HepG2 (cell line): ENCODE measurements at regions of chr9 and their contacts with region 1.

Region 1: DNA sequence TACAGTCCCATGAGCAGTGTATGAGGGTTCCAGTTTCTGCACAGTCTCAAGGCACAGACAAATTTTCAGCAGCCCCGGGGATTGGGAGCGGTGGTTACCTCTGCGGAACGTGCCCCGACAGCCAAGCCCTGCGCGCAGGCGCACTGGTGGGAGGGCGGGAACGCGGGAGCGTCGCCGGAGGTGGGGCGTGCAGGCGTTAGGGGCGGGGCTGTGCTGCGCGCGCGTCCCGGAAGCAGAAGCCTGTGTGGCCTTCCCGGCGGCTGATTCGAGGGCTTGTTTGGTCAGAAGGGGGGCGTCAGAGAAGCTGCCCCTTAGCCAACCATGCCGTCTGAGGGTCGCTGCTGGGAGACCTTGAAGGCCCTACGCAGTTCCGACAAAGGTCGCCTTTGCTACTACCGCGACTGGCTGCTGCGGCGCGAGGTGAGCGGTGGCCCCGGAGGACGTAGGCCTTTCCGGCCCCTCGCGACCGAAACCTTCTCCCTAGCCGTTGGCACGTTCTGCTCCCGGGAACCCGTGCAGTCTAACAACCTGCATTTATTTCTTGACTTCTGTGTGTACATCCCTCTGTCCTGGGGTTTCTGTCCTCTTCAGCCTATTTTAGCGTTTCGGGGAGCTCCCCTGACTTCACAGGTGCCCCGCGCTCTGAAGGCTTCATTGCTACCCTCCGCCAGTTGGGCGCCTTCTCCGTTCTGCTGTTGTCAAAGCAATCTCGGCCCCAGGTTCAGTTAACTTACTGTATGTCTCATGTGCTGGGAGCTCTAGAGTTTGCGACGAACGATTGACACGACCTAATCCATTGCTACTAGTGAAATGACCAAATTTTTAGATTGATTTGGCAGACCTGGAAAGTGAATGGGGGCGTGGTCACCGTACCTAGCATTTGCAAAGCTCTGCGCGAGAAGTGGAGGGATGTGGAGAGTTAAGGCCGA is at the start of gene GLE1:
- DNase-seq: peak; percentile 82
- ATAC-seq: peak; percentile 98
- H3K4me3 ChIP-seq: peak within 1 kb of the TSS; percentile 82 to 96 (median 90)
- H3K27ac ChIP-seq: peak within 1 kb of the TSS; percentile 79
- H3K4me1 ChIP-seq: peaks cover 21% of the 10 kb centered on the region
- H3K27me3 ChIP-seq: no peaks in the 10 kb centered on the region; a peak in 1 of 5 replicates
- CTCF ChIP-seq: peak; percentile 29; the same call in 1 of the 2 replicates
- EP300 ChIP-seq: no peak
- POLR2A ChIP-seq: peak; percentile 72 to 94
- RAD21 ChIP-seq: 0 out of 2 replicates have a peak, but pooled peaks have one; percentile 26
- total RNA-seq, gene GLE1: 28.8 and 41.1 TPM in 2 replicates

Region 2: DNA sequence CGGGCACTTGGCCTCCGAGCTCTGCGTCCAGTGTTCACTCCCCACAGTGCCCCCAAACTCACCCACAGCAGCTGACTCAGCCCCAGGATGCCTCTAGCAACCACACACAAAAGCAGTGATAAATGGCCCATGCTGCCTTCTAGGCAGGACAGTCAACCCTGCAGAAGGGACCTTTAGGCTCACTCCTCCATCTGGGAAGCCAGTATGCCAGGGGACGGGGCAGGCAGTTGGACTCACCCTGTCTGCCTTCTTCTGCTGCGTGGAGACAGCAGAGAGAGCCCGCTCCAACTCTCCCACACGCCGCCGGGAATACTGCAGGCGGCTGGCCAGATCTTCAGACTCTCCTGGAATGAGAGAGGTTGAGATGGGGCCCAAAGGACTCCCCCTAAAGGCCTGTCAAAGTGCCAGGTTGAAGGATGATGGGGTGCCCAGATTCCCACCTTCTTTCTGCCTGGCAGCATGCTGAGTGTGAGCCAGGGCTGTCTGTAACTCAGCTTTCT is 239.4 kb before region 1 on chr9:
- CTCF ChIA-PET with region 1: no interaction called
- POLR2A ChIA-PET with region 1: no interaction called
- in situ Hi-C with region 1: no loop called
- intact Hi-C with region 1: no loop called
- DNase-seq: no peak
- ATAC-seq: no peak
- H3K4me3 ChIP-seq: no peak overlapping the region
- H3K27ac ChIP-seq: no peak overlapping the region
- H3K4me1 ChIP-seq: no peaks in the 10 kb centered on the region
- H3K27me3 ChIP-seq: no peaks in the 10 kb centered on the region
- CTCF ChIP-seq: no peak
- EP300 ChIP-seq: no peak
- POLR2A ChIP-seq: peak in 1 of 2 experiments; percentile 19; a peak in 1 of 4 replicates
- RAD21 ChIP-seq: no peak

Region 3: GRCh38 chr9:128494108-128494745 is 10.5 kb before region 1 on chr9:
- CTCF ChIA-PET with region 1: no interaction called
- POLR2A ChIA-PET with region 1: interaction called, 11 read pairs
- in situ Hi-C with region 1: no loop called
- intact Hi-C with region 1: no loop called
- DNase-seq: no peak
- ATAC-seq: no peak
- H3K4me3 ChIP-seq: no peak overlapping the region
- H3K27ac ChIP-seq: no peak overlapping the region
- H3K4me1 ChIP-seq: peaks cover 17% of the 10 kb centered on the region
- H3K27me3 ChIP-seq: no peaks in the 10 kb centered on the region
- CTCF ChIP-seq: no peak
- EP300 ChIP-seq: no peak
- POLR2A ChIP-seq: no peak
- RAD21 ChIP-seq: no peak

Region 4: DNA sequence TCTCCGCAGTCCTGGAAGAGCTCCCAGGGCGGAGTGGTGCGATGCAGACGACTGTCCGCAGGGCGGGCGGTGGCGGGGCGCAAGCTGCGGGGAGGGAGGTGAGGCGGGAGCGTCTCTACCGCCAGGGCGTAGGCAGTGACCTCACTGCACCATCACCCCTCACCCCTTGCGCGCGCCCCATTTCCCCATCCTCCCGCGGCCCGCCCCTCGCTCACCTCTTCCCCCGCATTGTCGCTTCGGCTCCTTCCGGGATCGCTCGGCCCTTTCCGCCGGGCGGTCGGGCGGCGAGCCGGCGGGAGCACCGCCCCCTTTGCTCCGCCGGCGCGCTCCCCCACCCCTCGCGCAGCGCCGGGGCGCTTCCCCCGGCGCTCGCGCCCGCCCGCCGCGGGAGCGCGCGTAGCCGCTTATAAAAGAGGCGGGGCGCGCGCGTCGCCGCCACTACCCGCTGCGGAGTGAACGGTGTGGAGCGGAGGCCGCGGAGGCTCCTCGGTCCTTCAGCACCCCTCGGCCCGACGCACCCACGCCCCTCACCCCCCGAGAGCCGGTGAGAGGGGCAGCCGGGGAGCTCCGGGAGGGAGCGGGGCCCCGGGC is 47.5 kb after region 1 on chr9 and contains the start of gene SPTAN1:
- CTCF ChIA-PET with region 1: no interaction called
- POLR2A ChIA-PET with region 1: interaction called, 13 read pairs
- in situ Hi-C with region 1: no loop called
- intact Hi-C with region 1: loop called (anchors 5 kb)
- DNase-seq: peak; percentile 61
- ATAC-seq: peak; percentile 77
- H3K4me3 ChIP-seq: peak within 1 kb of the TSS; percentile 87 to 95 (median 90)
- H3K27ac ChIP-seq: peak within 1 kb of the TSS; percentile 67
- H3K4me1 ChIP-seq: peaks cover 64% of the 10 kb centered on the region
- H3K27me3 ChIP-seq: no peaks in the 10 kb centered on the region; a peak in 1 of 5 replicates
- CTCF ChIP-seq: peak; percentile 23; the same call in 1 of the 2 replicates
- EP300 ChIP-seq: no peak
- POLR2A ChIP-seq: peak; percentile 98 to 99
- RAD21 ChIP-seq: peak; percentile 67
- total RNA-seq, gene SPTAN1: 23.5 and 106 TPM in 2 replicates